ENCODE measurements at regions of chr12 and their contacts with region 1.

Region 1: DNA sequence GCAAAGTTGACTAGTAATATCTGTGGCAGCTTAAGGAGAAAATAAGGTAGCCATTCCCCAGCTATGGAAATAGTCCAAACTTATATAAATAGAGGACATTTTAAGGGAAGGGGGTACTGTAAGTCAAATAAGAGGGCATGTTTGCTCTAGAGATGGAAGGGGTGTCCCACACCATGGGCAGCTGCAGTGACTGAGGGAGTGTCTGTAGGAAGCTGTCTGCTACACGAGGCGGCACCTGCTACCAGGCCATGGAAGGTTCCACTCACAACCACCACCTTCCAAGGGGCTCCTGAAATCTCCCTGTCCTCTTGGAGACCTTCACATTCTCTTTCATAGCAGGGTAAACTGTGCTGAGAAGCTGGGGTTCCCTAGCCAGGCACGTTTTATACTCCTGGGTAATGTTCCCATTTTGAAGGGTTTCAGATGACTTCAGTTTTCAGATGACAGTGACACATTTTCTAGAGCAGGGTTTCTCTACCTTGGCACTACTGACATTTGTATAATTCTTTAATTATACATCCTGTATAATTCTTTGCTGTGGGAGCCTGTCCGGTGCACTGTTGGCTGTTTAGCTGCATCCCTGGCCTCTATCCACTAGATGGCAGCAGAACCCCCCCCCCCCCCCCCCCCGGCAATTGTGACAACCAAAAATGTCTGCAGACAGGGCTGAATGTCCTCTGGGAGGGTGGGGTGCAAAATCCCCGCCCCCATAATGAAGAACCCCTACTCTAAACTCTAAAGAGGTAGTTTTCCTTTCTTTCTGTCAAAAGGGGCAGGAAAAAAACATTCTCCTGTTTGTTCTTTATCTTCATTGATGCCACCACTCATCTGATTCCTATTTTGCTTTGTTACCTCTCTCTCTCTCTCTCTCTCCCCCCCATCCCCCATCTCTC is 11.6 kb upstream of the SMCO2 start:
- DNase-seq: no peak
- H3K4me3 ChIP-seq: no peak overlapping the region
- H3K27ac ChIP-seq: no peak overlapping the region
- H3K27me3 ChIP-seq: no peaks in the 10 kb centered on the region
- CTCF ChIP-seq: peak; percentile 60

Region 2: DNA sequence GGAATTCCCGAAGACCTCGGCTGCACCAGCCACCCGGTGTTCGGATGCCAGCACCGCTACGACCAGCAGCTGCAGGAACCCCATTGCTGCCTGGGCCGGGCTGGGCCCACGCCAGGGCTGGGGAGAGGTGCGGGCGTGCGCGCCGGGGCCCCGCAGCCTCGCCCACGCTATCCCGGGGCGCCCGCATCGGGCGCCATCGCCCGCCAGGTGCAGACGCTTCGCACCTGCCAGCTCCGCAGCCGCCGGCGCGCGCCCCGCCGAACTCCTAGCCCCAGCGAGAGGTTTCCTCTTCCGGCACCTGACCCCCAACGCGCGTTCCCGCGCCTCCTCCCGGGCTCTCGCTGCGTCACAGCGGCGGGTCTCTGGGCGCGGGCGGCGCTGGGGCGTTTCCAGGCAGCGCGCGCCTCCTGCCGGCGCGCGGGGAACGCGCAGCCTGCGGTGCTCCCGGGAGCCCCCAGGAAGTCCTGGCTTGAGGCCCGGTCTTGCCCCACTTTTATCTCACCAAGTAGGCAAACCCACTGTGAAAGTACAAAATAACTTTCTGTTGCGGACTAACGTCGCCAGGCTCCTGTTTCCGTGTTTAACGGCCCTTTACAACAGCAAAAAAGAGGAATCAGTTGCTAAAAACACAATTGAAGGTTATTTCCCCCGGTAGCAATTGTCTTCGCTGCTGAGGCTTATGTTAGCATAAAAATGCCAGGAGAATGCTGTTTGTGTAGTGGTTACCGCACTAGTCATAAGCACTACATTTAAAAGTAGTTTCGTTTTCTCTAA is 420.6 kb before region 1 on chr12 and contains the start of gene TM7SF3:
- CTCF ChIA-PET with region 1: no interaction called
- POLR2A ChIA-PET with region 1: no interaction called
- DNase-seq: peak; percentile 48
- H3K4me3 ChIP-seq: peak within 1 kb of the TSS; percentile 85
- H3K27ac ChIP-seq: peak within 1 kb of the TSS; percentile 88
- H3K27me3 ChIP-seq: no peaks in the 10 kb centered on the region
- CTCF ChIP-seq: peak; percentile 81
- polyA plus RNA-seq, gene TM7SF3: 116 and 120 TPM in 2 replicates

Region 3: GRCh38 chr12:27383429-27384260 is 51.3 kb before region 1 on chr12:
- CTCF ChIA-PET with region 1: interaction called, 10 read pairs
- POLR2A ChIA-PET with region 1: no interaction called
- DNase-seq: peak; percentile 63
- H3K4me3 ChIP-seq: no peak overlapping the region
- H3K27ac ChIP-seq: no peak overlapping the region
- H3K27me3 ChIP-seq: no peaks in the 10 kb centered on the region
- CTCF ChIP-seq: peak; percentile 93

Region 4: DNA sequence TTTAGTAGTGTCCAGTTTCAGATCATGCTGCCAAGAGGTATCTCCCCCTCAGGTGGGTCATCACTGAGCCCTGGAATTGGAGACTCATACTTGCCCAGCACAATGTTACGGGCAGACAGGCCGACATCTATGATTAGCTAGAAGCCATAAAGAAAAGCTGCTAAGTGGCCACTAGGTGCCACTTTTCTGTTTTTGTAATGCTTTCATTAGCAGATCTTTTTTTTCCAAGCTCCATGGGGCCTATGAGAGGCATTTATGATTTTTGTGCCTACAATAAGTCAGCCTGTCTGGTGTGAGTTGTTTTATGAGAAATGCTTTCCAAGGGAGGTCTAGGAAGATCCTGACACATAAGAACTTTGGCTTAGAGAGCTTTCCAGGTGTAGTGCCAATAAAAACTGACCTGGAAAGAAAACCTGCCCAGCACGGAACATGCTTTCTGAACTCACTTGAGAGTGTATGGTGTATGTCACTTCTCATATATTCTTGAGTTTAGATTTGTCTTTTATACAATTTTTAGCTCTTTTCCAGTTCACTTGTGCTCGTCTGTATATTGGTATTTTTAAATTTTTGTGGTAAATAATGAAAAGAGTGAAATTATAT is 10.2 kb before region 1 on chr12:
- CTCF ChIA-PET with region 1: interaction called, 14 read pairs
- POLR2A ChIA-PET with region 1: no interaction called
- DNase-seq: peak; percentile 7
- H3K4me3 ChIP-seq: no peak overlapping the region
- H3K27ac ChIP-seq: no peak overlapping the region
- H3K27me3 ChIP-seq: no peaks in the 10 kb centered on the region
- CTCF ChIP-seq: peak; percentile 60

Region 5: DNA sequence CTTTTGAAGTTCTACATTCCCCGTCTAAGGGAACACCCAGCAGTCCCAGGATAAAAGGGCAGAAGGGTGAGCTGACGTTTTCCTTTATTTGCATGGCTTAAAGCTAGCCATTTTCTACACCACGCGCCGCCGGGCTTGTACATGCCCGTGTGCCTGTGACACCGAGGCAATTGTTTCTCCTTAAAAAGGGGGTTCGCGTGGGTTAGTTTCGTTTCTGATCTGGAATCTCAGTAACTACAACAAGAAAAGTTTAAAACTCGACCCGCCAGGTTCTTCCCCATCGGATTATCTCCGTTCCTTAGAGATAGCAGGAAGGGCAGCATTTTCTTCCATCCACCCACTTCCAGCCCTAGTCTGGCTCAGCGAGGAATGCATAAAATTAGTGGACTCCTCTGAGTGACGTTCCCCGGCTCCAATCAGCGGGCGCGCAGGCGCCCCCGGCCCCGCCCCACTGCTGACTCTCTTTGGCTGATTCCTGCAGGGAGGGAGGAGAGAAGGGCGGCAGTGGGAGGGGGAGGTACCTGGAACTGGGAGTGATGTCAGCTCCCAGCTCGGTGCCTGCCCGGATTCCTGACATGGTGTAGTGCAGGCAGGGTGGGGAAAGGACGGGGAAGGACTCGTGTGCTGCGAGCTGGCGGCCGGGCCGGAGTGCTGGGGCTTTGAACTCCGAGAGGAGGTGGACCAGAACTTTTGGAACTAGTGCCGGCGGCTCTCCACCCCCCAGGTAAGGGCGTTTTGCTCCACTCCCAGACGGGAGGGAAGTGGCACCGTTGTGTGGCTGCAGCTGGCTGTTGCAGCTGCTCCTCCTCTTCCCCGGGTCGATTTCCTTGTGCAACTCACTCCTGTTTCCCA is 88.9 kb after region 1 on chr12 and contains the start of gene PPFIBP1:
- CTCF ChIA-PET with region 1: interaction called, 10 read pairs
- POLR2A ChIA-PET with region 1: interaction called, 5 read pairs
- DNase-seq: peak; percentile 94
- H3K4me3 ChIP-seq: peak within 1 kb of the TSS; percentile 84
- H3K27ac ChIP-seq: peak within 1 kb of the TSS; percentile 83
- H3K27me3 ChIP-seq: no peaks in the 10 kb centered on the region
- CTCF ChIP-seq: peak; percentile 37
- polyA plus RNA-seq, gene PPFIBP1: 42.5 and 58.3 TPM in 2 replicates

Region 6: DNA sequence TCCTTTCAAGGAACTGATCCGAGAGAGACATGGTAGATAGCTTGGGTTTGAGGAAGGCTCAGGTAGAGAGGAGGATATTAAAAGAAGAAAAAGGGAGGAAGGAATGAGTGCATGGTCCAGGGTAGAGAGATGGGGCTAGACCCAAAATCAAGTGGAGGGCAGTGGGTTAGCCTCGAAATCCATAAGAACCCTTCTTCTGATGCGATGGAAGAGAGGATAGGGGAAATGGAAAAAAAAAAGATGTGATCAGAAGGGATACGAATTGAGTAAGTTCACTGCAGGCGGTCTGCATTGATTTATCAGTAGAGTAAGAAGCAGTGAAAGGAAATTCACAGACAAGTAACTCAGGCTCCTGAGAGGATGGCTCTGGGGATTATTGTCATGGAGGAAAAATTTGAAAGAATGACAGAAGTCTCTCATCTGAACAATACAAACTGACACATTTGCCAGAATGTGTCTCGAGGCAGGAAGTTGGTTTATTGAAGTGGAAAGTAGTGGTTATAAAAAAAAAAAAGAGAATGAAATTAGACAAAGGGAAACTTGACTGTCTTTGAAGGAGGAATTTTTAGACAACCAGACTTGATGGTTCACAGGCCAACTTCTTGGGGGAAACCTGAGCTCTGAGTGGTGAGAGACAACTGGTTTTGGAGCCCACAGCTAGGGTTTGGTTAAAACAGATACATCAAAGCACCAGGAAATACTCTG is 99.3 kb after region 1 on chr12:
- CTCF ChIA-PET with region 1: no interaction called
- POLR2A ChIA-PET with region 1: no interaction called
- DNase-seq: no peak
- H3K4me3 ChIP-seq: no peak overlapping the region
- H3K27ac ChIP-seq: no peak overlapping the region
- H3K27me3 ChIP-seq: no peaks in the 10 kb centered on the region
- CTCF ChIP-seq: no peak

Region 7: DNA sequence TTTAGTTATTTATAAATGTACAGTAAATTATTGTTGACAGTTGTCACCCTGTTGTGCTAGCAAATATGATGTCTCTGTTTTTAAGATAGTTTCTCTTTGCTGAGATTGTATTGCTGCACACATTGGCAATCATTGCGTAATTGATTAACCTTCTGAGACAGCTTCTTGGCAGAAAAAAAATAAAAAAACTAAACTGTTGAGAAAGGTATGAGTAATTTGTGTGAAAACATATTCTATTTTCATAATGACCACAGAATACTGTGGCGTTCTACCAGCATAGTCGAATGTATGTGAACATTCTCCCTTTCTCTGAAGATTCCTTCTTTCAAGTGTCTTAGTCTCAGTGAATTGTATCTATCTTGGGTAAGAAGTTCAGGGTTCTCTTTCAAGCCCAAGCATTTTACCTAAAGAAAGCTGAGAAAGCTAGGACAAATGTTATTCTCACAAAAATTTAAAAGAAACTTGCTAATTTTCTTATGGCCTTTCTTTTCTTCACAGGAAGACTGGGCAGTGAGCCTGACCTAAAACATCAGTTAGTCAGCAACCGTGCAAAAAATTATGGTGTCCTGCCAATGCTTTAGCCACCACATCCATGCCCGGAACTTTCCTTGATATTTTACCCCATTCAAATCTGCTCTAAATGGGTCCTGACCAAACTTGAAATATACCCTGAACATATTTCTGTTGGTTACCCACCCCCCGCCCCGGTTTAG is 192.4 kb after region 1 on chr12:
- CTCF ChIA-PET with region 1: interaction called, 12 read pairs
- POLR2A ChIA-PET with region 1: no interaction called
- DNase-seq: peak; percentile 21
- H3K4me3 ChIP-seq: no peak overlapping the region
- H3K27ac ChIP-seq: peak overlapping the region; percentile 55
- H3K27me3 ChIP-seq: no peaks in the 10 kb centered on the region
- CTCF ChIP-seq: no peak

Region 8: DNA sequence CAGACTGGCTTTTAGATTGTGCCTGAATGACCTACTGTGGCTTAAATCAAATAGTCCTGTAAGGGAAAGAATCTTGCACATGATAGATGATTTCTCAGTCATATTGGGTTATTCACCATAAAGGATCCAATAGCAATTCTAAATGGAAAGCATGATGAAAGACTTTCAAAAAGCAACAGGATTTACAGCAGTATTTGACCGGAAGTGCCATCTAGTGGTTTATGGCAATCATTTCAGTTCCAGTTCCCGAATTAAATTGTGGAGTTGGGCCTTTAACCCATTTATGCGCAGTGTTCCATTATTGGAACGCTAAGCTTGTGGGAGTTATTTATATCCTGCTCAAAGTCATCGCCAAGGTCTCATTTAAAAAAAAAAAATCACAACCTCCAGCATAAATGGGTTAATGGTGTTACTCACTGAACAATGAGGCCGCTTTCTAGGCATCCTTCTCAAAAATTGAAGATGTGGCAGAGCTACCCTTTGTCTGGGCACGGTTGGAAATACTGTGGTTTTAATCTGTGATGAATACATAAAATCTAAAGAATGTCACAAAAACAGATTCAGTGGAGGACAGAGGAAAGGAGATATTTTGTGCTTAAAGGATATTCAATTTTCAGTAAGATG is 200.5 kb after region 1 on chr12:
- CTCF ChIA-PET with region 1: interaction called, 30 read pairs
- POLR2A ChIA-PET with region 1: no interaction called
- DNase-seq: no peak
- H3K4me3 ChIP-seq: no peak overlapping the region
- H3K27ac ChIP-seq: no peak overlapping the region
- H3K27me3 ChIP-seq: no peaks in the 10 kb centered on the region
- CTCF ChIP-seq: peak; percentile 72

Region 9: GRCh38 chr12:27652174-27652763 is 217.3 kb after region 1 on chr12:
- CTCF ChIA-PET with region 1: interaction called, 20 read pairs
- POLR2A ChIA-PET with region 1: no interaction called
- DNase-seq: peak; percentile 63
- H3K4me3 ChIP-seq: no peak overlapping the region
- H3K27ac ChIP-seq: no peak overlapping the region
- H3K27me3 ChIP-seq: no peaks in the 10 kb centered on the region
- CTCF ChIP-seq: peak; percentile 91

Region 10: DNA sequence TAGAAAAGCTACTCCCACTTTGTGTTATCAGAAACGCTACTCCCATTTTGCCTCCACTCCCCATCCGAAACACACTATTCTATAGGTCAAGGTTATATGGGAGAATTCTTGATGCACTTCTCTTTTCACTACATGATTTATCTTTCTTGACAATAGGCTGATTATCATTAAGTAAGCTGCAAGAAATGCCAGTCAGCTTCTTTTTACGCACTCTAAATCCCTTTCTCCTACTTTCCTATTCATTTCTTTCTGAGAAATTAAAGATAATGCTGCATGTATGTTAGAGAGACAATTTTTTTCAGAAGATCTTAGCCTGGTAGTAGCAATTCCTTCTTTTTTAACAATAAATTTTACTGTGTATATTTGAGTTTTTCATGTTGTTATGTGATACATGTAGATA is 714.4 kb after region 1 on chr12:
- CTCF ChIA-PET with region 1: no interaction called
- POLR2A ChIA-PET with region 1: no interaction called
- DNase-seq: no peak
- H3K4me3 ChIP-seq: no peak overlapping the region
- H3K27ac ChIP-seq: no peak overlapping the region
- H3K27me3 ChIP-seq: no peaks in the 10 kb centered on the region
- CTCF ChIP-seq: no peak